ENCODE measurements at regions of chr10 and their contacts with region 1.

Region 1: DNA sequence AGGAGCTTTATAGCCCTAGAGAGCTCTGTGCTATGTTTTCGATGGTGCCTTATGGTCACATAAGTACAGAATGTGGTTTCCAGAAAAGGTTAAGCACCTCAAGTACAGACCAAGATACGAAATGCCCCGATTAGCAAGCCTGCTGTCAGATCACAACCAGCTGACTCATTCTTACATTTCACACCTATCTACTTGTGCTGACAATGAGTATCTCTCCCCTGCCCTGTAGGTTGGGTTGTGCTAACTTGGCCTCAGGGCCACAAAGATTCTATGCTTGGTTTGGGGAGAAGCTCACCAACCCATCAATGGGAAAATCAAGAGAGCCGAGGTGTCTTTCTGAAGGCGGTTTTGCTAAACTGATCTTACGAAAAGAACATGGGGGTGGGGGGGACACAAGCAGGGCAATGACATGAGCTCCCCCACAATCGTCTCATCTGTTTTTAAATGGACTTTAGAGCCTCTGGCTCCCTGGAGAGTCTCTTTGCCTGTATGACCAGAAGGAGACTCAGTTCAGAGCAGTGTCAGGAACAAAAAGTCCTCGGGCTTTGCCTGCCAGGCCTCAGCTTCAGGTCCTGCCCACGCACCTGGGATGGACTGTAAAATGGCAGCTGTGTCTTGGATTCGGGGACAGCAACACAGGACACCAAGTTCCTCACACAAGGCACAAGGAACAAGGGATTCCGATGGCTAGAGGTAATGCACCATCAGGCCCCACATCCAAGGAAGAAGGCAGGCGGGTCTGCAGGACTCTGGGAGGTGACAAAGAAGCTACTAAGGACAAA is 55.1 kb downstream of the FAM53B start:
- DNase-seq: peak; percentile 83
- H3K4me3 Mint-ChIP-seq: peak overlapping the region; percentile 26
- H3K27ac Mint-ChIP-seq: peak overlapping the region; percentile 94
- H3K4me1 Mint-ChIP-seq: peaks cover 84% of the 10 kb centered on the region
- H3K27me3 Mint-ChIP-seq: no peaks in the 10 kb centered on the region

Region 2: GRCh38 chr10:124626759-124627380 is 62.2 kb before region 1 on chr10:
- CTCF ChIA-PET with region 1: interaction called, 15 read pairs
- POLR2A ChIA-PET with region 1: interaction called, 7 read pairs
- DNase-seq: peak; percentile 69
- H3K4me3 Mint-ChIP-seq: peak overlapping the region; percentile 36
- H3K27ac Mint-ChIP-seq: peak overlapping the region; percentile 78
- H3K4me1 Mint-ChIP-seq: peaks cover 46% of the 10 kb centered on the region
- H3K27me3 Mint-ChIP-seq: no peaks in the 10 kb centered on the region

Region 3: GRCh38 chr10:124657806-124658205 is 31.3 kb before region 1 on chr10:
- CTCF ChIA-PET with region 1: interaction called, 13 read pairs
- POLR2A ChIA-PET with region 1: interaction called, 27 read pairs
- DNase-seq: peak; percentile 62
- H3K4me3 Mint-ChIP-seq: peak overlapping the region; percentile 39
- H3K27ac Mint-ChIP-seq: peak overlapping the region; percentile 79
- H3K4me1 Mint-ChIP-seq: peaks cover 75% of the 10 kb centered on the region
- H3K27me3 Mint-ChIP-seq: no peaks in the 10 kb centered on the region

Region 4: DNA sequence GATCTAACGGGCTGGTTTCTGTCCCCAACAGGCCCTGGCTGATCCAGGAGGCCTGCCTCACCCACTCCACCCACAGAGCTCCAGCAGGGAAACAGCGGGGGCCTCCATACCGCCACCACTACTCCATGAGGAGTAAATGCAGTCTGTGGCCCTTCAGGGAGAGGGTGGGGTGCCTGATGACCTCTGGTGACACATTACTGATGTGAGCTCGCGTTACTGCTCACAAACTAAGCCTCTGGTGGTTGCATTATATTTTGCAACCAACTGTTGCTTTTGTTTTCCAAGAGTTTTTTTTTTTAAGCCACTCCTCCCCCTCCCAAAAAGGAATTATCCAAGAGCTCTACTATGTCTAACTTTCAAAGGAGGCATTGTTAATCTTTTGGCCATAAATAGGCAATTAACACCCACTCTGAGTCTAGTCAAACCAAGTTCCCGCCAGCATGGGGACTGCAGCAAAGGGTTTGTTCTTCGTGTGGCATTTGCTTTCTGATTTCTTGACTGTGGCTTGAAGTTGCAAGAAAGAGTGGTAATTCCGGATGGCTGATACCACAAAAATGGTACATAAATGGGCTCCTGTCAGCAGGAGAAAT is 17.5 kb before region 1 on chr10:
- CTCF ChIA-PET with region 1: interaction called, 16 read pairs
- POLR2A ChIA-PET with region 1: interaction called, 14 read pairs
- DNase-seq: no peak
- H3K4me3 Mint-ChIP-seq: no peak overlapping the region
- H3K27ac Mint-ChIP-seq: peak overlapping the region; percentile 76
- H3K4me1 Mint-ChIP-seq: peaks cover 71% of the 10 kb centered on the region
- H3K27me3 Mint-ChIP-seq: no peaks in the 10 kb centered on the region

Region 5: GRCh38 chr10:124677749-124678556 is 11.1 kb before region 1 on chr10:
- CTCF ChIA-PET with region 1: interaction called, 21 read pairs
- POLR2A ChIA-PET with region 1: interaction called, 53 read pairs
- DNase-seq: no peak
- H3K4me3 Mint-ChIP-seq: no peak overlapping the region
- H3K27ac Mint-ChIP-seq: peak overlapping the region; percentile 91
- H3K4me1 Mint-ChIP-seq: peaks cover 68% of the 10 kb centered on the region
- H3K27me3 Mint-ChIP-seq: no peaks in the 10 kb centered on the region

Region 6: DNA sequence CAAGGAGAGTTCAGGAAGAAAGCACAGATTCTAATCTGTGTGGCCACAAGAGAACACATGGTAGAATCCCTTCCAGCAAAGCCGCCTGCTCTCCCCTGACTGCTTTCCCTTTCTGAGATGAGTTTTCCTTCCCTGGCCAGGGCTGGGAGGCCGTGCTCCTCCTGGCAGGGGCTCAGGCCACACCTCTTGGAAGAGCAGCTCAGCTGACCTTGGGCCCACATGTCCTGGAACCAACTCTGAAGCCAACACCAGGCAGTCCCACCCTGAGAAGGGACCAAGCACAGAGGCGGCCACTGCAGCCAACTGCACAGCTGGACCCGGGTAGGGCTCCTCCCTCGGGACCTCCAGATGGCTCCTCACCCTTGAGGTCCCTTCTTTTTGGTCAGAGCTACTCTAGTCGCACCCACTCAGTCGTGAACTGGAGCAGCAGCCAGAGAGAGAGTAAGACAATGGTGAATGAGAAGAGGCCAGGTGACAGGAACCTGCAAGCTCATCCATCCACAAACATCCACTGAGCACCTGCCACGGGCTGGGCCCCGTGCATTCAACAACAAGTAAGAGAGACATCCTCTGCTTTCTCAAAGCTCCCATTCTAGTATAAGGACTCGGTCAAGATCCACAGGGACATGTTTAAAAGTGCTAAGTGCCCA is 14.8 kb after region 1 on chr10:
- CTCF ChIA-PET with region 1: interaction called, 15 read pairs
- POLR2A ChIA-PET with region 1: interaction called, 54 read pairs
- DNase-seq: no peak
- H3K4me3 Mint-ChIP-seq: no peak overlapping the region
- H3K27ac Mint-ChIP-seq: peak overlapping the region; percentile 96
- H3K4me1 Mint-ChIP-seq: peaks cover 99% of the 10 kb centered on the region
- H3K27me3 Mint-ChIP-seq: no peaks in the 10 kb centered on the region

Region 7: DNA sequence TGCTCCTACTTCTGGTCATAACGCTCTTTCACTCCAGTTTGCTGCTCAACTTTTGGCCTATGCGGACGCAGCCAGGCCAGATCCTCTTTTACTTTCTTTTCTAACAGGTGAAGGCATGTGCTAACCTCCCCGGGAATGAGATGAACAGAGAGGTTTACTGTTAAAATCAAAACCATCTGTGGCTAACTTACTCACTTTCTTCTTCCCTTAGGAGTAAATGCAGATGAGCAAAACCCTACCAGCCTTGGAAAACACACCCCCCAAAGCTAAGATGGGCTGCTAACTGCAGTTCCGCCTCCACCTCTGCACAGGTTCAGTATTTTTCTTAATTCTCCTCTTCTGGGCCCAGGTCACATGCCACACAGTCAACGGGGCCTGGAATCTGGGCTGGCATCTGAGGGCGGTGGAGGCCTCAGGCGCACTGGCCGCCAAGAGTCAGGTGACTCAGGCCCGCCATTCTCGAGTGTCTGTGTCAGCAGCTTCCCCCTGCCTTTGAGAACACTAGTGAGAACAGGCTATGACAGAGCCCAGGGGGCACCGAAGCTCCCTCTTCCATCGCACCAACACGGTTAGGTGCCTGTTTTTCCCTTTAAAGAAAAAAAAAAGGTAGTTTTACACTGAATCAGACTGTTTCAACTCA is 44.0 kb after region 1 on chr10:
- CTCF ChIA-PET with region 1: interaction called, 6 read pairs
- POLR2A ChIA-PET with region 1: interaction called, 41 read pairs
- DNase-seq: peak; percentile 72
- H3K4me3 Mint-ChIP-seq: peak overlapping the region; percentile 66
- H3K27ac Mint-ChIP-seq: peak overlapping the region; percentile 88
- H3K4me1 Mint-ChIP-seq: peaks cover 97% of the 10 kb centered on the region
- H3K27me3 Mint-ChIP-seq: no peaks in the 10 kb centered on the region

Region 8: DNA sequence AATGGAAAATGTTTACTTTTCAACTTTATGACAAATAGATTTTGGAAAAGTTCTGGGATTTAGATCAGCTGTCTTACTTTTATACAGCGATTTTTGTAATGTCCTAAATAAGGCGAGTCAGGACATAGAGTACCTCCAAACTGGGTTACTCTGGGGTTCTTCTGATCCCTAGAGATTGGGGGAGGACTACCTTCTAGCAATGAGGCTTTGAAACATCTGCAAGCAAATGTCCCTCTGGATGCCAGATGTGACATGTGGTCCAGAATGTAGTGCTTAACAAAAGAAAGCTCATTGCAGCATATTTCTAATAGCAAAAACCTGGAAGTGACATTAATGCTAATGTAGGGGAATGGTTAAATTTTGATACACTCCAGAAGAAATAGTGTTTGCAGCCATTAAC is 148.6 kb after region 1 on chr10:
- CTCF ChIA-PET with region 1: no interaction called
- POLR2A ChIA-PET with region 1: no interaction called
- DNase-seq: no peak
- H3K4me3 Mint-ChIP-seq: no peak overlapping the region
- H3K27ac Mint-ChIP-seq: no peak overlapping the region
- H3K4me1 Mint-ChIP-seq: no peaks in the 10 kb centered on the region
- H3K27me3 Mint-ChIP-seq: no peaks in the 10 kb centered on the region